T-cell (primary cell): ENCODE measurements at regions of chr2 and their contacts with region 1.

Region 1: GRCh38 chr2:121076885-121077549 is 208.0 kb downstream of the TFCP2L1 start:
- DNase-seq: peak in 34 of 35 experiments; percentile 8 to 64 (median 40)
- ATAC-seq: peak; percentile 45 to 63 (median 58)
- H3K4me3 ChIP-seq: no peak overlapping the region
- H3K4me3 Mint-ChIP-seq: no peak overlapping the region
- H3K27ac ChIP-seq: no peak overlapping the region
- H3K27ac Mint-ChIP-seq: no peak overlapping the region
- H3K4me1 ChIP-seq: peaks cover 0 to 6% of the 10 kb centered on the region in 2 experiments
- H3K4me1 Mint-ChIP-seq: peaks cover 2 to 5% (median 2%) of the 10 kb centered on the region in 3 donors
- H3K27me3 ChIP-seq: peaks cover 3 to 69% of the 10 kb centered on the region in 2 experiments
- H3K27me3 Mint-ChIP-seq: peaks cover 37 to 41% of the 10 kb centered on the region in 2 donors

Region 2: GRCh38 chr2:121092095-121092494 is 15.1 kb after region 1 on chr2:
- CTCF ChIA-PET with region 1: interaction called, 4 to 14 read pairs
- POLR2A ChIA-PET with region 1: no interaction called
- DNase-seq: no peak
- ATAC-seq: no peak
- H3K4me3 ChIP-seq: no peak overlapping the region
- H3K4me3 Mint-ChIP-seq: no peak overlapping the region
- H3K27ac ChIP-seq: no peak overlapping the region
- H3K27ac Mint-ChIP-seq: no peak overlapping the region
- H3K4me1 ChIP-seq: no peaks in the 10 kb centered on the region
- H3K4me1 Mint-ChIP-seq: no peaks in the 10 kb centered on the region
- H3K27me3 ChIP-seq: peaks cover 0 to 19% of the 10 kb centered on the region in 2 experiments
- H3K27me3 Mint-ChIP-seq: peaks cover 3 to 4% of the 10 kb centered on the region in 2 donors

Region 3: GRCh38 chr2:121333834-121334558 is 257.0 kb after region 1 on chr2:
- CTCF ChIA-PET with region 1: no interaction called
- POLR2A ChIA-PET with region 1: no interaction called
- DNase-seq: no peak
- ATAC-seq: no peak
- H3K4me3 ChIP-seq: no peak overlapping the region
- H3K4me3 Mint-ChIP-seq: no peak overlapping the region
- H3K27ac ChIP-seq: no peak overlapping the region
- H3K27ac Mint-ChIP-seq: no peak overlapping the region
- H3K4me1 ChIP-seq: no peaks in the 10 kb centered on the region
- H3K4me1 Mint-ChIP-seq: no peaks in the 10 kb centered on the region
- H3K27me3 ChIP-seq: peaks cover 0 to 8% of the 10 kb centered on the region in 2 experiments
- H3K27me3 Mint-ChIP-seq: peaks cover 0 to 7% of the 10 kb centered on the region in 2 donors

Region 4: GRCh38 chr2:121429119-121429903 is 352.3 kb after region 1 on chr2:
- CTCF ChIA-PET with region 1: no interaction called
- POLR2A ChIA-PET with region 1: no interaction called
- DNase-seq: no peak
- ATAC-seq: no peak
- H3K4me3 ChIP-seq: no peak overlapping the region
- H3K4me3 Mint-ChIP-seq: no peak overlapping the region
- H3K27ac ChIP-seq: no peak overlapping the region
- H3K27ac Mint-ChIP-seq: no peak overlapping the region
- H3K4me1 ChIP-seq: no peaks in the 10 kb centered on the region
- H3K4me1 Mint-ChIP-seq: no peaks in the 10 kb centered on the region
- H3K27me3 ChIP-seq: no peaks in the 10 kb centered on the region
- H3K27me3 Mint-ChIP-seq: no peaks in the 10 kb centered on the region